Aorta (tissue), 5 donors: ENCODE measurements at regions of chr19 and their contacts with region 1.

Region 1: GRCh38 chr19:12139885-12140547 is at the start of gene ZNF20:
- DNase-seq: peak; percentile 98 to 99
- ATAC-seq: peak; percentile 99
- H3K4me3 ChIP-seq: peak within 1 kb of the TSS; percentile 55 to 91
- H3K27ac ChIP-seq: peak within 1 kb of the TSS; percentile 30 to 38
- H3K4me1 ChIP-seq: no peaks in the 10 kb centered on the region
- H3K27me3 ChIP-seq: no peaks in the 10 kb centered on the region
- total RNA-seq, gene ZNF20: 3.8 to 6.8 TPM

Region 2: GRCh38 chr19:11798391-11799330 is 341.4 kb before region 1 on chr19 and contains the start of gene ZNF491:
- intact Hi-C with region 1: loop called in 1 of 2 experiments (anchors 5 kb)
- DNase-seq: peak; percentile 96 to 97
- ATAC-seq: peak; percentile 99
- H3K4me3 ChIP-seq: peak within 1 kb of the TSS; percentile 8 to 55
- H3K27ac ChIP-seq: peak within 1 kb of the TSS in 1 of 2 donors; percentile 26
- H3K4me1 ChIP-seq: no peaks in the 10 kb centered on the region
- H3K27me3 ChIP-seq: no peaks in the 10 kb centered on the region
- total RNA-seq, gene ZNF491: 3.1 to 4.8 TPM

Region 3: DNA sequence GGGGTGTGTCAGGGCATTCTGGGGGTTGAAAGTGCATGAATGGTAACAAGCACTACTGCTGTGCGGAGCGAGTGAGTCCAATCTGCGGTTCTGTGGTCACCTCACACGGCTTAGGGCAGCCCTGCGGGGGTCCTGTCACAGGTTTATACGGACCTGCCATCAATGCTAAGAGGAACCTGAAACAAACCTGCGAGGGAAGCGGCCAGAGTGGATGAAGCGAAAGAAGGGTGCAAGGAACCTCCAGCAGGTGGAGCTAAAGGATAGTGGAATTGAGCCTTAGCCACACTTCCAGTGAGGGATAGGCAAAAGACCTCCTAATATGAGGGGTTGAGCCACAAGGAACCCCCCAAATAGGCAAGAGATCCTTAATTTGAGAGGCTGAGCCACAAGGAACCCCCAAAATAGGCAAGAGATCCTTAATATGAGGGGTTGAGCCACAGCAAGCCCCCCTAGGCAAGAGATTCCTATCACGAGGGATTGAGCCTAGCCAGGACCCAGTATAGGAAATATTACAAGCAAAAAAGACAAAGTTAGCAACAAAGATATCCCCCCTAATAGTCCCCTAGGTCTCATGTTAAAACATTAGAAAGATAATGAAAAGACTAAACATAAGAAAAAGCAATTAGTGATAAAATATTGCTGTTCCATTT is 258.7 kb before region 1 on chr19:
- intact Hi-C with region 1: loop called in 1 of 2 experiments (anchors 2 kb)
- DNase-seq: peak; percentile 50 to 69
- ATAC-seq: peak; percentile 56
- H3K4me3 ChIP-seq: no peak overlapping the region
- H3K27ac ChIP-seq: no peak overlapping the region
- H3K4me1 ChIP-seq: no peaks in the 10 kb centered on the region
- H3K27me3 ChIP-seq: no peaks in the 10 kb centered on the region

Region 4: DNA sequence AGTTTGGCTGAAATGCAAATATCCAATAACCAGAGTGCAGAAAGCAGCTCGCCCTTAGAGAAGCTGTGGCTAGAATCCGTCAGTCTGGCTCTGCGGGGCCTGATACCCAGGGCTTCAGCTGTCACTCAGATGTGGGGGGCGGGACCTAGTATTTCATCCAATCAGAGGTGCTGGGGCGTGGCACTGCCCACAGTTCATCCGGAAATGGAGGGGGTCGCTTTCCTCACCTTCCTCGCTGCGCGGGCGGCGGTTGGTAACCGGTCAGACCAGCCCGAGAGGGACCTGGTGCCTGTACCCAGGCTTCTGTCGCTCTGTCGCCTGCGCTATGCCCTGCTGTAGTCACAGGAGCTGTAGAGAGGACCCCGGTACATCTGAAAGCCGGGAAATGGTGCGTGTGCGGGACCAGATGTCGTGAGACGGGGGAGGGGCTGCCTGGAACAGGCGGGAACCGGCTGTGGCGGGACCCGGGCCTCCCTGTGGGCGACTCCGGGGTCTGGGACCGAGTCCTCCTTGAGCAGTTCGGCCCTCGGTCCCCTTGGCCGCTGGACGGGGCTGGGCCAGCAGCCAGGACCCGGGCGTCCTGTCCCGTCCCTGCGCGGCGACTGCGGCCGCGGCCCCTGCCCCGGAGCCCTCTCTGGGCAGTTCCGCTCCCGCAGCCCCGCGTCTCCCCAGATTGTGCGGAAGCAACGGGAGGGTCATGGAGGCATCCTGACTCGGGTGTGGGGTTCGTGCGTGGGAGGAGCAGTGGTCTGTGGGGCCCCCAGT is 214.9 kb before region 1 on chr19 and contains the start of gene ZNF700:
- intact Hi-C with region 1: loop called (anchors 2 to 10 kb)
- DNase-seq: peak; percentile 95 to 97
- ATAC-seq: peak; percentile 98
- H3K4me3 ChIP-seq: peak within 1 kb of the TSS; percentile 42 to 79
- H3K27ac ChIP-seq: peak within 1 kb of the TSS in 1 of 2 donors; percentile 49
- H3K4me1 ChIP-seq: peaks cover 0 to 2% of the 10 kb centered on the region in 2 donors
- H3K27me3 ChIP-seq: no peaks in the 10 kb centered on the region
- total RNA-seq, gene ZNF700: 11.6 to 19.2 TPM

Region 5: GRCh38 chr19:11964858-11965645 is 175.0 kb before region 1 on chr19 and contains the start of gene ZNF763:
- intact Hi-C with region 1: loop called (anchors 1 to 2 kb)
- DNase-seq: peak; percentile 96 to 97
- ATAC-seq: peak; percentile 97
- H3K4me3 ChIP-seq: peak within 1 kb of the TSS; percentile 23 to 68
- H3K27ac ChIP-seq: peak within 1 kb of the TSS; percentile 29 to 50
- H3K4me1 ChIP-seq: no peaks in the 10 kb centered on the region
- H3K27me3 ChIP-seq: no peaks in the 10 kb centered on the region
- total RNA-seq, gene ZNF763: 1.9 to 5.1 TPM

Region 6: GRCh38 chr19:12092065-12092867 is 47.8 kb before region 1 on chr19:
- intact Hi-C with region 1: loop called (anchors 2 to 5 kb)
- DNase-seq: peak; percentile 95 to 96
- ATAC-seq: peak; percentile 94
- H3K4me3 ChIP-seq: peak overlapping the region; percentile 44 to 77
- H3K27ac ChIP-seq: peak overlapping the region in 1 of 2 donors; percentile 63
- H3K4me1 ChIP-seq: no peaks in the 10 kb centered on the region
- H3K27me3 ChIP-seq: no peaks in the 10 kb centered on the region